Heart left ventricle (tissue), 16 donors: ENCODE measurements at regions of chr5 and their contacts with region 1.

Region 1: DNA sequence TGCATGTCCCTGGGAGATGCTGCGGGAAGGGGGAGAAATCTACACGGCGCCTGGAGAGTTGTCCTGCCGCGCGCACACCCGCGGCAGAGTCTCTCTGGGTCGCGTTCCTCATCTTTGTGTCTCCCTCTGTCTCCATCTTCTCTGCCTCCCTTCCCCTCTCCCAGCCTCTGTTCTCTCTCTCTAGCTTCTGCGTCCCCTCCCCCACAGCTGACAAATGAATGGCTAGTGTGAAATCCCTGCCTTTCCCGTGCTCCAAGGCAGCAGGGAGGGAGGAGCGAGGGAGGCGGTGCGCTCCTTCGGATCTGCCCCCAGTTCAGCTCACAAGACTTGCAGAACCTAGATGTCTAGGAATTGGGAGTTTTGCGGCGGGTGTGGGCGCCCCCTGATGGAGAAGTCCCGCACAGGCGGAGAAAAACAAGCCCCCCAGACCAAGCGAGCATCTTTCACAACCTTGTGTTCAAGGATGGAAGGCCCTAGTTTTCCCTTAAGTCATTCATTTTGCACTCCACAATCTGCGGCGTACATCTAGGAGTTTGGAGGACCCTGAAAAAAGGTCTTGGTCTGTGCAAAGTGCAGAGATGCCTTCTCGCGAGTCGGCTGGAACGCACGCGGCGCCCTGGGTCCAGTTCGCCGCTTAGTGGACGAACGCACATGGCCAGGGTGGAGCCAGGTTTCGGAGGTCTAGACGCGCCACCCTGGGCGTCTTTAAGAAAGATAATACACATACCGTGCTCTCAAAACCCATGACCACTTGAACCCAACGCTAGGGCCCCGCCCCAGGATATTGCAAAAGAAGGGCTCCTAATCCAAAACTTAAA is 2.0 kb downstream of the VCAN start:
- DNase-seq: peak; percentile 85 to 92 (median 88)
- ATAC-seq: peak; percentile 78 to 88 (median 83)
- H3K4me3 ChIP-seq: peak overlapping the region; percentile 34 to 69 (median 56)
- H3K27ac ChIP-seq: peak overlapping the region; percentile 14 to 88 (median 72)
- H3K4me1 ChIP-seq: peaks cover 0 to 54% (median 25%) of the 10 kb centered on the region in 12 donors
- H3K27me3 ChIP-seq: peaks cover 0 to 68% (median 36%) of the 10 kb centered on the region in 9 donors
- CTCF ChIP-seq: peak; percentile 70 to 92 (median 84)
- POLR2A ChIP-seq: no peak

Region 2: DNA sequence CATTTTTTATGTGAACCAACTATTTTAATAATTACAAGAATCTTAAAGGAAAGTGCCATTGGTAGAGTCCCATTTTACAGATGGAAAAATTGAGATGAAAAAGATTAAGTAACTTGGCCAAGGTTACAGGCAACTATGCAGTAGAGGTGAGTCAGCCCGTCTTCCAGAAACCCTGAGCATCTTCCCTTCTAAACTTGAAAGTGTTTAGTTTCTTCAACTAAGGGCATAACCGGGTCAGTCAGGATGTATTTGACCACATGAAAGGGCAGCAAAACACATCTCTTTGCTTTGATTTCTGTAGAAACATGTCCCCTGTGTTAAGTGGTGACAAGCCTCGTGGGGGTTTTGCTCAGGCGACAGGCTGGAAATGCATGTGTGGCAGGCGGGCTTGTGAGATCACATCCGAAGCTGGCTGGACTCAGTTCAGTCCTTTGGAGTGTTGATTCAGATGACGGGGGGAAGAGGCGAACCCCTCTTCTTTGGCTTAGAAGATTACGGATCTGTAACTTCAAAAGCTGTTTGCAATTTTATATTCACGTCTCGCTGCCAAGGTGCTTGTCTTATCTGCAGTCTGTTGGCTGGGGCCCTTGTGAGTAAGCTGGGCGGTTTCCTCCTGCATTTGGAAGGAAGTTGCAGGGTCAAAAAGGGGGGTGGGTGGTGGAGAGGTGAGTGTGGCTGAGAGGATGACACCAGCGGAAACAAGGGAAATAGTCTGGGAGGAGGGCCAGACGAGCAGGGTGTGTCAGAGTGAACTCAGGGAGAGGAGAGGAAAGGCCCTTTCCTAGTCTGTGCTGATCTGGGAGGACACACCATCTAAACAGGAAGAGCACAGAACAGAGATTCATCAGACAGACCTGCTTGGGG is 1116.5 kb before region 1 on chr5:
- intact Hi-C with region 1: loop called in 9 of 10 experiments (anchors 2 to 10 kb)
- DNase-seq: peak; percentile 77 to 93 (median 84)
- ATAC-seq: peak; percentile 91 to 97 (median 94)
- H3K4me3 ChIP-seq: peak overlapping the region in 1 of 12 donors; percentile 17
- H3K27ac ChIP-seq: peak overlapping the region; percentile 46 to 84 (median 70)
- H3K4me1 ChIP-seq: peaks cover 0 to 38% (median 26%) of the 10 kb centered on the region in 12 donors
- H3K27me3 ChIP-seq: no peaks in the 10 kb centered on the region
- CTCF ChIP-seq: no peak
- POLR2A ChIP-seq: no peak

Region 3: GRCh38 chr5:83553000-83553486 is 79.5 kb after region 1 on chr5:
- intact Hi-C with region 1: loop called in 2 of 10 experiments (anchors 10 kb)
- DNase-seq: peak in 4 of 5 donors; percentile 43 to 76 (median 66)
- ATAC-seq: peak; percentile 47 to 95 (median 80)
- H3K4me3 ChIP-seq: no peak overlapping the region
- H3K27ac ChIP-seq: peak overlapping the region in 7 of 12 donors; percentile 15 to 55 (median 47)
- H3K4me1 ChIP-seq: peaks cover 0 to 24% (median 0%) of the 10 kb centered on the region in 12 donors
- H3K27me3 ChIP-seq: no peaks in the 10 kb centered on the region
- CTCF ChIP-seq: no peak
- POLR2A ChIP-seq: no peak